Activated T-helper 2 cell treated with anti-CD3 and anti-CD28 coated beads, Interferon-gamma antibody, Interleukin-2, Interleukin-4, amounts not matched to agents 10 μg/mL and 5 μg/mL and 100 μg/mL, durations not matched to agents 14 hours and 24 hours and 36 hours (primary cell): ENCODE measurements at regions of chr11 and their contacts with region 1.

Region 1: GRCh38 chr11:42145311-42145710 is 685.9 kb upstream of the LRRC4C start:
- DNase-seq: no peak
- H3K4me3 Mint-ChIP-seq: no peak overlapping the region
- H3K27ac Mint-ChIP-seq: no peak overlapping the region
- H3K4me1 Mint-ChIP-seq: no peaks in the 10 kb centered on the region
- H3K27me3 Mint-ChIP-seq: no peaks in the 10 kb centered on the region

Region 2: DNA sequence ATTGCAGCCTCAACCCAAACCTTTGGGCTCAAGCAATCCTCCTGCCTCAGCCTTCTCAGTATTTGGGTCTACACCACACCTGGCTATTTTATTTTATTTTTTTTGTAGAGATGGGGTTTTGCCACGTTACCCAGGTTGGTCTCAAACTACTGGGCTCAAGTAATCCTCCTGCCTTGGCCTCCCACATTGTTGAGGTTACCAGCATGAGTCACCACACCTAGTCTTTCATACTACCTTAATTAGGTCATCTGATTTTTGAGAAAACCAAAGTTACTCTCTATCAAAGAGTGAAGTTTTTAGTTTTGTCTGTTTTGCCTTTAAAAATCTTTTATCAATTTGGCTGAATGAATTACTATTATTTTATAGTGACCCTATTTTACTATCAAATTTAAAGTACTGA is 350.3 kb before region 1 on chr11:
- intact Hi-C with region 1: no loop called
- DNase-seq: no peak
- H3K4me3 Mint-ChIP-seq: no peak overlapping the region
- H3K27ac Mint-ChIP-seq: no peak overlapping the region
- H3K4me1 Mint-ChIP-seq: no peaks in the 10 kb centered on the region
- H3K27me3 Mint-ChIP-seq: no peaks in the 10 kb centered on the region

Region 3: GRCh38 chr11:42085736-42086135 is 59.6 kb before region 1 on chr11:
- intact Hi-C with region 1: loop called (anchors 10 kb)
- DNase-seq: no peak
- H3K4me3 Mint-ChIP-seq: no peak overlapping the region
- H3K27ac Mint-ChIP-seq: no peak overlapping the region
- H3K4me1 Mint-ChIP-seq: no peaks in the 10 kb centered on the region
- H3K27me3 Mint-ChIP-seq: no peaks in the 10 kb centered on the region